PC-9 (cell line): ENCODE measurements at regions of chr17 and their contacts with region 1.

Region 1: DNA sequence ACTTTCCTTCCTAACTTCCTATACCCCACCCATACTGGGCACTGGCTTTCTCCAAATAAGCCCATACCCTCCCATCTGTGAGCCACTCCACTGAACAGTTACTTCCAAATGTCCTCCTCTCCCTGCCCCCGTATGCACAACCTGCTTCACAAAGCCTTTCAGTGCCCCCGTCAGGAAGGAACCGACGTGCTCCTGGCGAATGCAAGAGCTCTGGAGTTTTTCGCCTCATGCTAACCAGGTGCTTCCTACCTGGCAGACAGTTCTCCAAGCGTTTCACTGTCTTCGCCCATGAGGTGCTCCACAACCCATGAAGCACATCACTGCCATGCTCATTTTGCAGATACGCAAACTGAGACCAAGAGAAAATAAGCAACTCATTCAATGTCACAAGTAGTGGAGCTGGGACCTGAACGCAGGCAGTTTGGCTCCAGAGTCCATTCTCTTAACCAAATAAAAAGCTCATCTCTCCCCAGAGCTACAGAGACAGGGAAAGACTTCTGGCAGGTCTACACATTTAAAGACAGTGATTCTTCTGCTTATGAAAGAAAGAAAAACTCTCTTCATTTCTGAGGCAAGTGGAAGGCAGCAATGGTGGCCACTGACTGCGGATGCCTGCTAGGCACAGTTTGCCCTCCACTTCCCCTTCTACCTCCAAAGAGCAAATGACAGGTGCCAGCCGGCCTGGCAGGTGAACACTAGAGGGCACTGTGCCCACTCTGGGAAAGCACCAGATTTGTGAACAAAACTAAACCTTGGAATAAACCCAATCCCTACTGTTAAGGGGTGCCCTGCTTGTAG is 23.8 kb downstream of the SPHK1 start:
- DNase-seq: peak in 1 of 2 experiments; percentile 67
- H3K4me3 ChIP-seq: no peak overlapping the region
- H3K27ac ChIP-seq: no peak overlapping the region
- H3K4me1 ChIP-seq: no peaks in the 10 kb centered on the region
- H3K27me3 ChIP-seq: no peaks in the 10 kb centered on the region
- CTCF ChIP-seq: peak; percentile 79

Region 2: DNA sequence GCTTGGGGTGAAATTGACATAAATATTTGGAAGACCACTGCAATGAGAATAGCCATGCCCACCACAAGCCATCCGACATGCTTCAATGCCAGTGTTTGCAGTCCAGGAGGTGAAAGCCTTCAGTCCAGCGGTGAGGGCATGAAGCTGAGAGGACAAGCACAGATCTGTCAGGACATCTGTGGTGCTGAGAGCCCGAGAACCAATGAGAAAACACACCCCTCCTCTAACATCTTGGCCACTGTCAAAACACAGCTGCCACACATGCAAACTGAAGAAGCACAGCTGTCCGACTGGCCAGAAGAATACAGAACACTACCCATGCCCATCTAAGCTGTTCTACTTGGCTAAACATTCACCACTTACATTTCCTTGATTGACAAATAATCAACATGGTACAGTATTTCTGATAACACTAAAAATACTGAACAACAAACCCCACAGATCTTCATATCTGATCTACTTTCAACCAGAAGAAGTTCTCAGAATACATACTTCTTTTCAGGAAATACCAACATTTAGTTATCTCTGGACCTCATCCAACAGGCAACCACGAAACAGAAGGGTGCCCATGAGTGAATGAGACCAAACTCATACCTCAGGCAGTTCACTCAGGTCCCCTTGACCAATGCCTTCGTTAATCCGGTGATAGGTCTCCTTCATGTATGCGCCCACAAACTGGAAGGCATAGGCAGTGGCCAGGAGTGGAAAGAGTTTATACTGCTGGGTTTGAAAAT is 457.3 kb before region 1 on chr17:
- CTCF ChIA-PET with region 1: interaction called, 11 read pairs
- POLR2A ChIA-PET with region 1: no interaction called
- intact Hi-C with region 1: no loop called
- DNase-seq: no peak
- H3K4me3 ChIP-seq: no peak overlapping the region
- H3K27ac ChIP-seq: no peak overlapping the region
- H3K4me1 ChIP-seq: no peaks in the 10 kb centered on the region
- H3K27me3 ChIP-seq: no peaks in the 10 kb centered on the region
- CTCF ChIP-seq: no peak

Region 3: GRCh38 chr17:76384222-76384986 is 23.8 kb before region 1 on chr17 and contains the start of gene SPHK1:
- CTCF ChIA-PET with region 1: no interaction called
- POLR2A ChIA-PET with region 1: no interaction called
- intact Hi-C with region 1: no loop called
- DNase-seq: peak; percentile 37 to 78
- H3K4me3 ChIP-seq: peak within 1 kb of the TSS; percentile 68
- H3K27ac ChIP-seq: no peak within 1 kb of the TSS
- H3K4me1 ChIP-seq: peaks cover 4% of the 10 kb centered on the region; the same call in 1 of the 2 replicates
- H3K27me3 ChIP-seq: no peaks in the 10 kb centered on the region
- CTCF ChIP-seq: no peak
- total RNA-seq, gene SPHK1: 5.5 and 9.3 TPM in 2 replicates

Region 4: GRCh38 chr17:76432712-76433336 is 24.6 kb after region 1 on chr17:
- CTCF ChIA-PET with region 1: no interaction called
- POLR2A ChIA-PET with region 1: no interaction called
- intact Hi-C with region 1: no loop called
- DNase-seq: no peak
- H3K4me3 ChIP-seq: no peak overlapping the region
- H3K27ac ChIP-seq: no peak overlapping the region
- H3K4me1 ChIP-seq: no peaks in the 10 kb centered on the region
- H3K27me3 ChIP-seq: no peaks in the 10 kb centered on the region
- CTCF ChIP-seq: peak; percentile 64

Region 5: GRCh38 chr17:76506408-76507349 is 98.4 kb after region 1 on chr17:
- CTCF ChIA-PET with region 1: no interaction called
- POLR2A ChIA-PET with region 1: no interaction called
- intact Hi-C with region 1: loop called (anchors 1 kb)
- DNase-seq: peak; percentile 43 to 87
- H3K4me3 ChIP-seq: no peak overlapping the region
- H3K27ac ChIP-seq: no peak overlapping the region
- H3K4me1 ChIP-seq: no peaks in the 10 kb centered on the region
- H3K27me3 ChIP-seq: no peaks in the 10 kb centered on the region
- CTCF ChIP-seq: peak; percentile 86

Region 6: DNA sequence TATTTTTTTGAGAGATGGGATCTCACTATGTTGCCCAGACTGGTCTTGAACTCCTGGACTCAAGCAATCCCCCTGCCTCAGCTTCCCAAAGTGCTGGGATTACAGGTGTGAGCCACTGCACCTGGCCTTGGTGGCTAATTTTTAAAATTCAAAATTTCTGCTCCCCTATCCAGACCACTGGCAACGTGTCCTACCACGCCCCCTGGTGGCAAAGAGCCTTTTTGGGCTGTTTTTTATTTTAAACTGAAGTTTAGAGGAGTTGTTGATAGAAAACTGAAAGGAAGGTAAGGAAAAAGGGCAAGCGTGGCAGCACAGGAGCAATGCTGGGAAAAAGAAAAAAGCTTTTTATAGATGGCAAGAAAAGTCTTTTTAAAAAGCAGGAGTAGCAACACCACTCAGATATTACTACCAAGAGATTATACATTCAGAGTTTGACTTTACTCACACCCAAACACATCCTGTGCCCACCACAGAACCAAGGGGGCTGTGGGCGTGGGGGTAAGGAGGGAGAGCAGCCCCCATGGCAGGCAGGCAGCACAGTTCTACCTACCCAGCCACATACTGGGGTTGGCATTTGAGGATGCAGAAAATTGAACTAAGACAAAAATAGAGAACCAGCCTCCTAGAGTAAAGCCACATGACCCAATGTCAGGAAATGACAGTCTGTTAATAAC is 306.7 kb after region 1 on chr17:
- CTCF ChIA-PET with region 1: no interaction called
- POLR2A ChIA-PET with region 1: no interaction called
- intact Hi-C with region 1: loop called (anchors 1 kb)
- DNase-seq: peak in 1 of 2 experiments; percentile 61
- H3K4me3 ChIP-seq: no peak overlapping the region
- H3K27ac ChIP-seq: no peak overlapping the region
- H3K4me1 ChIP-seq: 0 out of 2 replicates have a peak, but pooled peaks cover 6% of the 10 kb centered on the region
- H3K27me3 ChIP-seq: no peaks in the 10 kb centered on the region
- CTCF ChIP-seq: peak; percentile 86